HepG2 (cell line): ENCODE measurements at regions of chr3 and their contacts with region 1.

Region 1: GRCh38 chr3:124730129-124730940 is at the start of gene UMPS:
- DNase-seq: peak; percentile 83
- ATAC-seq: peak; percentile 96
- H3K4me3 ChIP-seq: peak within 1 kb of the TSS; percentile 75 to 92 (median 88)
- H3K27ac ChIP-seq: peak within 1 kb of the TSS; percentile 98
- H3K4me1 ChIP-seq: peaks cover 43% of the 10 kb centered on the region
- H3K27me3 ChIP-seq: no peaks in the 10 kb centered on the region; a peak in 1 of 5 replicates
- CTCF ChIP-seq: peak; percentile 8; the same call in 1 of the 2 replicates
- EP300 ChIP-seq: peak; percentile 30 to 46; a peak in 2 of 4 replicates
- POLR2A ChIP-seq: peak; percentile 92
- RAD21 ChIP-seq: peak; percentile 50; the same call in 1 of the 2 replicates
- total RNA-seq, gene UMPS: 74.2 and 117 TPM in 2 replicates

Region 2: DNA sequence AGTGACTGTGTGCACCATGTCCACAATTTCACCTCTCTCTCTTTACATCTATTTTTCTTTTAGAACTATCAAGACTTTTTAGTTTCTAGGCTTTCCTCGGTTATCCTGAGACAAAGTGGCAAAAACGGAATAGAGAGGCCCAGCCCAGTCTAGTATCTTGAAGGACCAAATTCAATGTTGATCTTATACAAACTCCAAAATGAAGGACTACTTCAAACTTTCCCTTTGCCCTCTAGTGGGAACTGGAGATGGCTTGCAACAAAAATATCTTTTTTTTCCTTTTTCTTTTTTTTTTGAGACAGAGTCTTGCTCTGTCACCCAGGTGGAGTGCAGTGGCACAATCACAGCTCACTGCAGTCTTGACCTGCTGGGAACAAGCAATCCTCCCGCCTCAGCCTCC is 338.6 kb before region 1 on chr3:
- CTCF ChIA-PET with region 1: no interaction called
- POLR2A ChIA-PET with region 1: no interaction called
- in situ Hi-C with region 1: no loop called
- intact Hi-C with region 1: no loop called
- DNase-seq: no peak
- ATAC-seq: no peak
- H3K4me3 ChIP-seq: no peak overlapping the region
- H3K27ac ChIP-seq: no peak overlapping the region
- H3K4me1 ChIP-seq: no peaks in the 10 kb centered on the region
- H3K27me3 ChIP-seq: no peaks in the 10 kb centered on the region
- CTCF ChIP-seq: no peak
- EP300 ChIP-seq: no peak
- POLR2A ChIP-seq: no peak
- RAD21 ChIP-seq: no peak

Region 3: DNA sequence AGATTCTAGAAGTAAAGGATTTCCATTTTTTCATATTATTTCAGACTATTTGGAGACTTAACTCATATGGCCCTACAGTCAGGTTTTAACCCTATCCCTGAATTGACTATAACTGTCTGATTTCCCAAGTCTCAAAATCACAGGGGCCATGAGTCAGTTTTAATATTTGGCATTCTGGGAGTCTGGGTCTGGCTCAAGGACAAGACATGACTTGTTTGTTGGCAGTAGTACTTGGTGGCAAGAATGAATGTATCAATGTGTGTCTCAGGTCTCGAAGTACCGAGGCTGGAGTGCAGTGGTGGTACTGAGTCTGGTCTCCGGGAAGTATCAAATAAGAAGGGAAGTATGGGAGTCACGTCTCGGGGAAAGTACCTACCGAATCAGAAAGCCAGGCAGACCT is 10.7 kb after region 1 on chr3:
- CTCF ChIA-PET with region 1: no interaction called
- POLR2A ChIA-PET with region 1: interaction called, 18 read pairs
- in situ Hi-C with region 1: no loop called
- intact Hi-C with region 1: loop called (anchors 1 kb)
- DNase-seq: no peak
- ATAC-seq: no peak
- H3K4me3 ChIP-seq: no peak overlapping the region
- H3K27ac ChIP-seq: no peak overlapping the region
- H3K4me1 ChIP-seq: peaks cover 12% of the 10 kb centered on the region
- H3K27me3 ChIP-seq: no peaks in the 10 kb centered on the region
- CTCF ChIP-seq: no peak
- EP300 ChIP-seq: no peak
- POLR2A ChIP-seq: no peak
- RAD21 ChIP-seq: no peak

Region 4: GRCh38 chr3:124747111-124747981 is 17.0 kb after region 1 on chr3:
- CTCF ChIA-PET with region 1: no interaction called
- POLR2A ChIA-PET with region 1: interaction called, 13 read pairs
- in situ Hi-C with region 1: no loop called
- intact Hi-C with region 1: loop called (anchors 1 kb)
- DNase-seq: no peak
- ATAC-seq: peak; percentile 52
- H3K4me3 ChIP-seq: no peak overlapping the region
- H3K27ac ChIP-seq: no peak overlapping the region
- H3K4me1 ChIP-seq: peaks cover 6% of the 10 kb centered on the region
- H3K27me3 ChIP-seq: no peaks in the 10 kb centered on the region
- CTCF ChIP-seq: peak; percentile 22; the same call in 1 of the 2 replicates
- EP300 ChIP-seq: no peak
- POLR2A ChIP-seq: 0 out of 4 replicates have a peak, but pooled peaks of 1 of the 2 experiments have one; percentile 24
- RAD21 ChIP-seq: no peak